B cell (primary cell): ENCODE measurements at regions of chr1 and their contacts with region 1.

Region 1: DNA sequence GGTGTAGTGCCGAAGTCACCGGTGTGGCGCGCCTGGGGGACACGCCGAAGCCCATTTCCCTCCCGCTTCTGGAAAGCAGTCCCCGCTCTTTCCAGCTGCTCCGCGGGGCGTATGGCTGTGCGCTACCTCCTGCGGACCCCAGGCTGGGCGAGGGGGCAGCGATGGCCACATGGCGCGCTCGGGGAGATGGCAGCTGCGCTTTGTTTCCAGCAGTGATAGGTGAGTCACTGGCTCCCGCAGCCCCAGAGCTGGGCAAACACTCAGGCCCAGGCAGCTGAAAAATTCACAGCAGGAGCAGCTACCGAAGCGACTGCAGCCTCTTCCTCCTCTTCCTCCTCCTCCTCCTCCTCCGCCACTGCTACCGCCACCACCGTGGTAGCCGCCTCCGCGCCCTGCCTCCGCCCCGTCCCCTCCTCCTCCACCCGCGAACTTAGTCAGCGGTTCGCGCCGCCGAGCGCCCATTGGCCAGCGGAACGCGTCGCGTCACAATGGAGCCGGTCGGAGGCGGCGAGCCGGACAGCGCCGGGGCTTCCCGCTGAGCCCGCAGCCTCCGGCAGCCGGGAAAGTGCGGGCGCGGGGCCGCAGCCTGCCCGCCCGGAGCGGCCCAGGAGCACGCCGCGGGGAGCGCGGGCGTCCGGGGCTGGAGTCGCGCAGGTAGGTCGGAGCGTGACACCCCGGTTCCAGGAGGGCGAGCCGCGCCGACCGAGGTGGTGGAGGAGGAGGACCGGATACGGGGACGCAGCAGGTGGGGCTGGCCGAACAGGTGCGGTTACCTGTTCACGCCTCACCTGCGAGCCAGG is at the start of gene LRRC8B:
- DNase-seq: peak; percentile 94
- ATAC-seq: peak; percentile 81
- H3K4me3 ChIP-seq: peak within 1 kb of the TSS; percentile 58 to 99 (median 88)
- H3K4me3 Mint-ChIP-seq: peak within 1 kb of the TSS; percentile 98
- H3K27ac ChIP-seq: peak within 1 kb of the TSS; percentile 97 to 98
- H3K27ac Mint-ChIP-seq: peak within 1 kb of the TSS; percentile 97
- H3K4me1 ChIP-seq: peaks cover 13 to 23% of the 10 kb centered on the region in 2 donors
- H3K4me1 Mint-ChIP-seq: peaks cover 26% of the 10 kb centered on the region
- H3K27me3 ChIP-seq: no peaks in the 10 kb centered on the region
- H3K27me3 Mint-ChIP-seq: no peaks in the 10 kb centered on the region
- CTCF ChIP-seq: peak; percentile 6
- total RNA-seq, gene LRRC8B: 9.9 and 11.7 TPM in 2 replicates

Region 2: GRCh38 chr1:88891318-88891950 is 633.1 kb before region 1 on chr1 and contains the start of gene GTF2B:
- CTCF ChIA-PET with region 1: no interaction called
- POLR2A ChIA-PET with region 1: no interaction called
- intact Hi-C with region 1: loop called (anchors 2 kb)
- DNase-seq: peak; percentile 98
- ATAC-seq: peak; percentile 92
- H3K4me3 ChIP-seq: peak within 1 kb of the TSS; percentile 84 to 99 (median 89)
- H3K4me3 Mint-ChIP-seq: peak within 1 kb of the TSS; percentile 95
- H3K27ac ChIP-seq: peak within 1 kb of the TSS; percentile 83 to 89
- H3K27ac Mint-ChIP-seq: peak within 1 kb of the TSS; percentile 97
- H3K4me1 ChIP-seq: peaks cover 19 to 28% of the 10 kb centered on the region in 2 donors
- H3K4me1 Mint-ChIP-seq: peaks cover 39% of the 10 kb centered on the region
- H3K27me3 ChIP-seq: no peaks in the 10 kb centered on the region
- H3K27me3 Mint-ChIP-seq: no peaks in the 10 kb centered on the region
- CTCF ChIP-seq: no peak
- total RNA-seq, gene GTF2B: 32.0 and 36.8 TPM in 2 replicates

Region 3: GRCh38 chr1:89598450-89599331 is 74.1 kb after region 1 on chr1:
- CTCF ChIA-PET with region 1: interaction called, 18 read pairs
- POLR2A ChIA-PET with region 1: no interaction called
- intact Hi-C with region 1: loop called (anchors 1 kb)
- DNase-seq: peak; percentile 62
- ATAC-seq: peak; percentile 70
- H3K4me3 ChIP-seq: no peak overlapping the region
- H3K4me3 Mint-ChIP-seq: no peak overlapping the region
- H3K27ac ChIP-seq: no peak overlapping the region
- H3K27ac Mint-ChIP-seq: peak overlapping the region; percentile 16
- H3K4me1 ChIP-seq: no peaks in the 10 kb centered on the region
- H3K4me1 Mint-ChIP-seq: peaks cover 4% of the 10 kb centered on the region
- H3K27me3 ChIP-seq: no peaks in the 10 kb centered on the region
- H3K27me3 Mint-ChIP-seq: no peaks in the 10 kb centered on the region
- CTCF ChIP-seq: peak; percentile 86

Region 4: DNA sequence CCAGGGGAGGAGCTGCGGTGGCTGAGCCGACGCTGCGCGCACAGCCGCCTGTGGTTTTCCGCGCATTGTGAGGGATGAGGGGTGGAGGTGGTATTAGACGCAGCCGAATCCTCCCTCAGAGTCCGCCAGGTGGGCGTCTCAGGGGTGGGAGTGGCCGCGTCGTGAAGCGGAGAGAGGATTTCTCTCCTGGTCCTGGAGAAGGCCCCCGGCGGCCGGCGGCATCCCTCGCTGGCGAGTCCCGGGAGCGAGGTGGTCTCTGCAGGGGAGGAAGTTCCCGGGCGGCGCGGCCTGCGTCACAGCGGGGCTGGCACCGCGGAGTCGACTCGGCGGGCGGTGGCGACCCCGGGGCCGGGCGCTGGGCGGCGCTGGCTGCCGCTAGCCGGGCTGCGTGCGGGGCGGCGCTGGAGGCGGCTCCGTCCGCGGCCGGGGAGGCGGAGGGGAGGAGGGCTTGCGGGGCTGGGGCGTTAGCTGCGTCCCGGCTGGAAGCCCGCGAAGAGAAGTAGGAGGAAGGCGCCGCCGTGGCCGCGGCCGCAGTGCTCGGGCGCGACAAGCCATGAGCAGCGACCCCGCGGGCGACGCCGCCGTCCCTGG is 108.2 kb after region 1 on chr1 and contains the start of gene LRRC8C:
- CTCF ChIA-PET with region 1: interaction called, 3 read pairs
- POLR2A ChIA-PET with region 1: no interaction called
- intact Hi-C with region 1: loop called (anchors 1 kb)
- DNase-seq: peak; percentile 93
- ATAC-seq: peak; percentile 88
- H3K4me3 ChIP-seq: peak within 1 kb of the TSS; percentile 70 to 95 (median 88)
- H3K4me3 Mint-ChIP-seq: peak within 1 kb of the TSS; percentile 97
- H3K27ac ChIP-seq: peak within 1 kb of the TSS; percentile 83 to 88
- H3K27ac Mint-ChIP-seq: peak within 1 kb of the TSS; percentile 97
- H3K4me1 ChIP-seq: peaks cover 15 to 23% of the 10 kb centered on the region in 2 donors
- H3K4me1 Mint-ChIP-seq: peaks cover 45% of the 10 kb centered on the region
- H3K27me3 ChIP-seq: no peaks in the 10 kb centered on the region
- H3K27me3 Mint-ChIP-seq: no peaks in the 10 kb centered on the region
- CTCF ChIP-seq: peak; percentile 64
- total RNA-seq, gene LRRC8C: 6.7 and 6.8 TPM in 2 replicates

Region 5: DNA sequence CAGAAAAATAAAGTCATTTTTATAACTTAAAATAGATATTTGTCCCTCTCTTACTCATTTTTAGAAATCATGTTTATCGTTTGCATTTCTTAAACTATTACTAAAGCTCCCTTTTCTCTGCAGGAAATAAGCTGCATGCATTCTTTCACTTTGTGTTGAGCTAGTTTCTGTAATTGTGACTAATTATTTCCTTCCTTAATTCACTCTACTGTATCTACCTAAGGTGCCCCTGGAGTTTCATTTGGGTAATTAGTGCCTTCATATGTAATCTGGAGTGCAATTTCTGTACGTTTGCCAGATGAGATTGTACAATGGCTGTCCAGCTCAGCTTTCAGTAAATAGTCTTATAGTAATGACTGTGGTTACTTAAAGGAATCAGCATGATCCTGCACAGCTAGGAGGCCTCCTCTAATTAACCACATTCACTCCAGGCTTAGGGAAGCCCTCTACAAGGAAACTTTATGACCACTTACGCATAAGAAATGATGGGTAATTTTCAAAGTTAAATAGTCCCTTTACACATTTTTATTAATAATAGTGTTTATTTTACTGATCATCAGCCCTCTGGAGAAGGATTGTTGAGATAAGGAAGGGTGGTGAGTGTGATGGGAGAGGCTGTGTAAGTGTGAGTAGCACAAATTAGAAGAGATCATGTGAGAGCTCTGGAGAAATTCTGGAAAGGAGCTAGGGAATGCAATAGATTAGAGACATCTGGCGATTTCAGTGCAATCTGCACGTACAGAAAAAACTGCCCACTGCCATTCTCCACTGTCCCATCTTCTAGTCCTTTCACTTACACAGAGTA is 195.1 kb after region 1 on chr1:
- CTCF ChIA-PET with region 1: no interaction called
- POLR2A ChIA-PET with region 1: no interaction called
- intact Hi-C with region 1: loop called (anchors 5 kb)
- DNase-seq: peak; percentile 62
- ATAC-seq: peak; percentile 88
- H3K4me3 ChIP-seq: peak overlapping the region in 2 of 5 experiments; percentile 19 to 30
- H3K4me3 Mint-ChIP-seq: peak overlapping the region; percentile 64
- H3K27ac ChIP-seq: peak overlapping the region; percentile 11 to 45
- H3K27ac Mint-ChIP-seq: peak overlapping the region; percentile 42
- H3K4me1 ChIP-seq: peaks cover 38 to 46% of the 10 kb centered on the region in 2 donors
- H3K4me1 Mint-ChIP-seq: peaks cover 53% of the 10 kb centered on the region
- H3K27me3 ChIP-seq: no peaks in the 10 kb centered on the region
- H3K27me3 Mint-ChIP-seq: no peaks in the 10 kb centered on the region
- CTCF ChIP-seq: peak; percentile 18

Region 6: GRCh38 chr1:89994805-89995597 is 470.4 kb after region 1 on chr1 and contains the start of gene ZNF326:
- CTCF ChIA-PET with region 1: no interaction called
- POLR2A ChIA-PET with region 1: no interaction called
- intact Hi-C with region 1: loop called (anchors 1 kb)
- DNase-seq: peak; percentile 94
- ATAC-seq: peak; percentile 97
- H3K4me3 ChIP-seq: peak within 1 kb of the TSS; percentile 72 to 95 (median 80)
- H3K4me3 Mint-ChIP-seq: peak within 1 kb of the TSS; percentile 99
- H3K27ac ChIP-seq: peak within 1 kb of the TSS; percentile 85 to 87
- H3K27ac Mint-ChIP-seq: peak within 1 kb of the TSS; percentile 96
- H3K4me1 ChIP-seq: peaks cover 8 to 12% of the 10 kb centered on the region in 2 donors
- H3K4me1 Mint-ChIP-seq: peaks cover 32% of the 10 kb centered on the region
- H3K27me3 ChIP-seq: no peaks in the 10 kb centered on the region
- H3K27me3 Mint-ChIP-seq: no peaks in the 10 kb centered on the region
- CTCF ChIP-seq: no peak
- total RNA-seq, gene ZNF326: 32.0 and 34.1 TPM in 2 replicates